ENCODE measurements at regions of chrX and their contacts with region 1.

Region 1: GRCh38 chrX:70289793-70290776 is at the starts of genes KIF4A and PDZD11:
- DNase-seq: peak; percentile 67
- ATAC-seq: peak; percentile 100
- H3K4me3 Mint-ChIP-seq: peak within 1 kb of the TSS; percentile 86
- H3K27ac Mint-ChIP-seq: peak within 1 kb of the TSS; percentile 72
- H3K4me1 Mint-ChIP-seq: peaks cover 13% of the 10 kb centered on the region
- H3K27me3 Mint-ChIP-seq: no peaks in the 10 kb centered on the region
- CTCF ChIP-seq: no peak
- total RNA-seq, gene KIF4A: 0.49 TPM in 2 replicates
- total RNA-seq, gene PDZD11: 17.1 and 18.5 TPM in 2 replicates

Region 2: GRCh38 chrX:70133303-70134115 is 156.6 kb before region 1 on chrX and contains the start of gene IGBP1:
- CTCF ChIA-PET with region 1: no interaction called
- POLR2A ChIA-PET with region 1: no interaction called
- intact Hi-C with region 1: loop called (anchors 1 kb)
- DNase-seq: peak; percentile 57
- ATAC-seq: peak; percentile 82
- H3K4me3 Mint-ChIP-seq: peak within 1 kb of the TSS; percentile 99
- H3K27ac Mint-ChIP-seq: peak within 1 kb of the TSS; percentile 96
- H3K4me1 Mint-ChIP-seq: peaks cover 29% of the 10 kb centered on the region
- H3K27me3 Mint-ChIP-seq: no peaks in the 10 kb centered on the region
- CTCF ChIP-seq: no peak
- total RNA-seq, gene IGBP1: 51.6 and 52.7 TPM in 2 replicates

Region 3: DNA sequence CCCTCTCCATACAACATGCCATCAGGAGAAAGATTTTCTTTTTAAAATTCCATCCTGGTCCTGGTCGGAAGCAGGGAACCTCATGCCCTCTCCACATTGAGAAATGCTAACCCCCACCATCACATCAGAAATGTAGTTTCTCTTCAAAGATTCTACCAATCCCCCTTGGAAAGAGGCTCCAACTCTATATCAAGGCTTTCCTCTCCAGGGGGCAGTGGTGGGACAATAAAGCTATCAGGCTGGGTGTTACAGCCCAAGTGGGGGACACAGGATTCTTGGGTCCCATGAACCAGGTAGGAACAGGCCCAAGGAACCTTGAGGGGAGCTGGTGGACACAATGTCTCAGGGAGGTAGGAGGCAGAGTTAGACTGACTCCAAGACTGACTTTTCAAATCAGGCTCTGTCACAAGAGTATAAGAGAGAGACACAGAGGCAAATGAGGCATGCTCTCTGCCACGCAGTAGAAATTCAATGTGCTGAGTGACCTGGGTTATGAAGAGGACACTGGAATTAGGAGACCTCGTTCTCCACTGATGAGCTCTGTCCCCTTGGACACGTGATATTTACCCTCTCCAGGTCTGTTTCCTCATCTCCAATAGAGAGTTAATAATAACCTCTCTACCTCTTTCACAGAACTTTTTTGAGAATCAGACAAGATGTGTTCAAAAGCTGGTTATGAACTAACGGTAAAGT is 937.4 kb after region 1 on chrX:
- CTCF ChIA-PET with region 1: no interaction called
- POLR2A ChIA-PET with region 1: no interaction called
- intact Hi-C with region 1: no loop called
- DNase-seq: no peak
- ATAC-seq: no peak
- H3K4me3 Mint-ChIP-seq: no peak overlapping the region
- H3K27ac Mint-ChIP-seq: no peak overlapping the region
- H3K4me1 Mint-ChIP-seq: no peaks in the 10 kb centered on the region
- H3K27me3 Mint-ChIP-seq: peaks cover 1% of the 10 kb centered on the region
- CTCF ChIP-seq: no peak

Measured in activated B cell treated with CpG ODN at 0.5 μM for 24 hours (primary cell).